ENCODE measurements at regions of chr16 and their contacts with region 1.

Region 1: GRCh38 chr16:10835281-10835931 is 16.8 kb upstream of the TVP23A start:
- DNase-seq: no peak
- H3K4me3 ChIP-seq: no peak overlapping the region
- H3K27ac ChIP-seq: no peak overlapping the region
- H3K4me1 ChIP-seq: no peaks in the 10 kb centered on the region
- H3K27me3 ChIP-seq: no peaks in the 10 kb centered on the region
- CTCF ChIP-seq: no peak
- EP300 ChIP-seq: no peak
- POLR2A ChIP-seq: no peak

Region 2: GRCh38 chr16:10743610-10744393 is 91.6 kb before region 1 on chr16 and contains the start of gene NUBP1:
- intact Hi-C with region 1: loop called in 1 of 4 experiments (anchors 10 kb)
- DNase-seq: peak; percentile 97 to 100 (median 100)
- H3K4me3 ChIP-seq: peak within 1 kb of the TSS; percentile 63
- H3K27ac ChIP-seq: peak within 1 kb of the TSS; percentile 95 to 98
- H3K4me1 ChIP-seq: no peaks in the 10 kb centered on the region
- H3K27me3 ChIP-seq: no peaks in the 10 kb centered on the region
- CTCF ChIP-seq: peak in 1 of 3 donors; percentile 53
- EP300 ChIP-seq: peak; percentile 74
- POLR2A ChIP-seq: peak; percentile 73
- total RNA-seq, gene NUBP1: 15.1 to 37.4 (median 31.2) TPM